Heart left ventricle (tissue), 16 donors: ENCODE measurements at regions of chr7 and their contacts with region 1.

Region 1: GRCh38 chr7:150448789-150449147 is 1.7 kb upstream of the GIMAP8 start:
- DNase-seq: peak; percentile 83 to 90 (median 85)
- ATAC-seq: peak in 3 of 4 donors; percentile 36 to 58 (median 57)
- H3K4me3 ChIP-seq: peak overlapping the region in 3 of 12 donors; percentile 0 to 74 (median 30)
- H3K27ac ChIP-seq: peak overlapping the region; percentile 75 to 97 (median 88)
- H3K4me1 ChIP-seq: peaks cover 0 to 46% (median 15%) of the 10 kb centered on the region in 12 donors
- H3K27me3 ChIP-seq: no peaks in the 10 kb centered on the region
- CTCF ChIP-seq: peak; percentile 87 to 95 (median 90)
- POLR2A ChIP-seq: no peak

Region 2: DNA sequence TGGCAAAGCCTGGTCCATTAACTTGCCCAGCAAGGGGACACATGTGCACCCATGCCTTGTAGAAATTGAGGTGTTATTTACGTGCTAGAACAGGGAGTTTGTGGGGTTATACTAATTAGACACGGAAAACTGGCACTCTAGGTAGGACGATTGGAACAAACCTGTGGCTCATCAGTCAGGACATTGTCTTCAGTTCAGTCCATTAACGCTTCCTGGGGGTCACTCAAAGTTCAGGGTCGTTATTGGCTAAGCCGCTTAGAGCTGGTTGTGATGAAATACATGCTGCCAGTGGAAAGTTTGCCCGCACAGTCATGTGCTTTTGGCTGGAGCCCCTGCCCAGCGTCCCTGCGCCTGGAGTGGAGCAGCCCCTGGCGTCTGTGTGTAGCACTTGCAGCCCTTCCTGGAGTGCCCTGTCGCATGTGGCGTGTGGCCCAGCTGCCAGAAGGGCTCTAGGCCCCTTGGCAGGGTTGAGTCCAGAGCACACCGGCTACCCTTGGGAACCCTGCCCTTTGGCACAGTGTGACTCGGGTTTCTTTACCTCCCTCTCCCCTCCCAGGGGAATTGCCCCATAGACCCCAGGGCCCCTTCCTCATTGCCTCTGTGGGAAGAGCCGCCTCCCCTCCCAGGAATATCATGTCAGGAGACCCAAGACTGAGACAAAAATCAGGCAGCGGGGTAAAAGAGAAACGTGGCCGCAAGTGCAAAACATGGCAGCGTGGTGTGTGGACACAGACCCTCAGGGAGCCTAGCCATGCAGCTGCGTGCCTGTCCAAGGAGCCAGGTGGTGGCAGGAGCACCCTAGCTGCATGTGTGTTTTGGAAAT is 59.8 kb before region 1 on chr7:
- intact Hi-C with region 1: no loop called
- DNase-seq: peak; percentile 69 to 90 (median 84)
- ATAC-seq: peak; percentile 96 to 98 (median 97)
- H3K4me3 ChIP-seq: no peak overlapping the region
- H3K27ac ChIP-seq: peak overlapping the region in 7 of 12 donors; percentile 22 to 77 (median 62)
- H3K4me1 ChIP-seq: peaks cover 0 to 20% (median 0%) of the 10 kb centered on the region in 12 donors
- H3K27me3 ChIP-seq: no peaks in the 10 kb centered on the region
- CTCF ChIP-seq: peak; percentile 40 to 82 (median 63)
- POLR2A ChIP-seq: no peak

Region 3: GRCh38 chr7:150417863-150418262 is 30.9 kb before region 1 on chr7:
- intact Hi-C with region 1: no loop called
- DNase-seq: peak in 1 of 5 donors; percentile 4
- ATAC-seq: no peak
- H3K4me3 ChIP-seq: no peak overlapping the region
- H3K27ac ChIP-seq: no peak overlapping the region
- H3K4me1 ChIP-seq: peaks cover 0 to 6% (median 0%) of the 10 kb centered on the region in 12 donors
- H3K27me3 ChIP-seq: no peaks in the 10 kb centered on the region
- CTCF ChIP-seq: no peak
- POLR2A ChIP-seq: no peak

Region 4: GRCh38 chr7:150514748-150515222 is 66.0 kb after region 1 on chr7 and contains the start of gene GIMAP7:
- intact Hi-C with region 1: loop called in 7 of 10 experiments (anchors 2 to 5 kb)
- DNase-seq: peak in 3 of 5 donors; percentile 34 to 38 (median 35)
- ATAC-seq: peak; percentile 75 to 87 (median 78)
- H3K4me3 ChIP-seq: peak within 1 kb of the TSS; percentile 24 to 69 (median 60)
- H3K27ac ChIP-seq: peak within 1 kb of the TSS; percentile 66 to 92 (median 85)
- H3K4me1 ChIP-seq: peaks cover 0 to 21% (median 2%) of the 10 kb centered on the region in 12 donors
- H3K27me3 ChIP-seq: no peaks in the 10 kb centered on the region
- CTCF ChIP-seq: no peak
- POLR2A ChIP-seq: peak in 1 of 2 donors; percentile 68
- total RNA-seq, gene GIMAP7: 14.4 to 46.8 (median 18.9) TPM

Region 5: GRCh38 chr7:150586785-150587152 is 138.0 kb after region 1 on chr7:
- intact Hi-C with region 1: loop called in 1 of 10 experiments (anchors 5 kb)
- DNase-seq: peak in 1 of 5 donors; percentile 43
- ATAC-seq: peak; percentile 86 to 98 (median 90)
- H3K4me3 ChIP-seq: peak overlapping the region in 1 of 12 donors; percentile 10
- H3K27ac ChIP-seq: peak overlapping the region; percentile 65 to 93 (median 82)
- H3K4me1 ChIP-seq: peaks cover 0 to 46% (median 22%) of the 10 kb centered on the region in 12 donors
- H3K27me3 ChIP-seq: no peaks in the 10 kb centered on the region
- CTCF ChIP-seq: no peak
- POLR2A ChIP-seq: peak in 1 of 2 donors; percentile 35

Region 6: GRCh38 chr7:150753826-150754603 is 305.2 kb after region 1 on chr7:
- intact Hi-C with region 1: loop called (anchors 1 to 5 kb)
- DNase-seq: no peak
- ATAC-seq: peak; percentile 26 to 60 (median 41)
- H3K4me3 ChIP-seq: no peak overlapping the region
- H3K27ac ChIP-seq: peak overlapping the region in 9 of 12 donors; percentile 24 to 90 (median 81)
- H3K4me1 ChIP-seq: peaks cover 0 to 61% (median 41%) of the 10 kb centered on the region in 12 donors
- H3K27me3 ChIP-seq: no peaks in the 10 kb centered on the region
- CTCF ChIP-seq: peak in 9 of 12 donors; percentile 23 to 57 (median 44)
- POLR2A ChIP-seq: no peak

Region 7: DNA sequence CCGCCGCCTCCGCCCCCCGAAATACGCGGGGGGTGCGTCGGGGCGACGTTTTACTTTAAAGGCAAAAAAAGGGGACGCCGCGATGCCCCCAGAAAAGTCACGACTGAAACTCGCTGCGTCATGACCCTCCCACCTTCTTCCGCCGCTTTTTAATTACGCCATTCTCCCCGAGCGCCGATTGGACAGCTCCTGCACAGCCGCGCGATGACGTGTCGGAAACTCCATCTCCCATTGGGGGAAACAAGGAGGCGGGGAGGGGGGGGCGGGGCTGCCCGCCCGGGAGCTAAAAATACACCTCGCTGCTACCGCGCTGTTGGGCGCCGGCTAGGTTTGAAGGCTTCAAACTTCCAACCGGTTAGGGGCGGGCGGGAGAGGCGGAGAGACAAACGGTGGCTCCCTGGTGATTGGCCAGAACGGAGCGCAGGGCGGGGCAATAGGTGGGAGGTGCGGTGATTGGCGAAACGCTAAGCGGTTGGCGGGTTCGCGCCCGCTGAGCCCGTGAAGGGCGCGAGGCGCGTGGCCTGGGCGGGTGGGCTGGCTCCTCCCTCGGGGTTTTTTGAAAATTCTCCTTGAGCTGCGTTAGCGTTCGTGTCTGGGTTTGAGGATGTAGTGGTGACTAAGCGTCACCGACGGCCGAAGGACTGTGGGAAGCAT is 1071.1 kb after region 1 on chr7 and contains the start of gene RHEB:
- intact Hi-C with region 1: loop called in 1 of 10 experiments (anchors 10 kb)
- DNase-seq: peak; percentile 98 to 99 (median 99)
- ATAC-seq: peak; percentile 93 to 98 (median 96)
- H3K4me3 ChIP-seq: peak within 1 kb of the TSS; percentile 55 to 98 (median 79)
- H3K27ac ChIP-seq: peak within 1 kb of the TSS; percentile 91 to 100 (median 98)
- H3K4me1 ChIP-seq: peaks cover 0 to 45% (median 28%) of the 10 kb centered on the region in 12 donors
- H3K27me3 ChIP-seq: no peaks in the 10 kb centered on the region
- CTCF ChIP-seq: no peak
- POLR2A ChIP-seq: no peak
- total RNA-seq, gene RHEB: 81.4 to 155 (median 106) TPM